Psoas muscle (tissue), 8 donors: ENCODE measurements at regions of chr18 and their contacts with region 1.

Region 1: DNA sequence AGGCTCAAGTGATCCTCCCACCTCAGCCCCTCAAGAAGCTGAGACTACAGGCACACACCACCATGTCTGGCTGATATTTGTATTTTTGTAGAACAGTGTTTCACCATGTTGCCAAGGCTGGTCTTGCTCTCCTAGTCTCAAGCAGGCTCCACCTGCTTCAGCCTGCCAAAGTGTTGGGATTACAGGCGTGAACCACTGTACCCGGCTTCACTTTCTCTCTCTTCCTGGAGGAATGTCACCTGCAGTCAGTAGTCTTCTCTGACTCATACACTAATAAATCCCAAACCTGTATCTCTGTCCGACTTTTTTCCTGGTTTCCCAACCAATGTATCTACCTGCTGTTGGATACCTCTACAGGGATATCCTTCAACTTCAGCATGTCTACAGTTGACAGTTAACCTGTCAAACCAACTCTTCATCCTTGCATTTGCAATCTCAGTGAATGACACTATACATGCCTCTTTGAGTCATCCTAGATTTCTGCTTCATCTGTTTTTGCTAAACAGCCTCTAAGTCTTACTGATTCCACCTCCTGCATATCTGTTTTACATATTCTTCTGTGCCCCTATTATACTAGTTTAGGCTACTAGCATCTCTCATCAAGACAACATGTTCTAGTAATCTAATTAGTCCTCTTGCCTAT is 54.5 kb downstream of the RBBP8 start:
- DNase-seq: no peak
- ATAC-seq: no peak
- H3K4me3 ChIP-seq: no peak overlapping the region
- H3K27ac ChIP-seq: no peak overlapping the region
- H3K4me1 ChIP-seq: no peaks in the 10 kb centered on the region
- H3K27me3 ChIP-seq: no peaks in the 10 kb centered on the region
- CTCF ChIP-seq: no peak

Region 2: DNA sequence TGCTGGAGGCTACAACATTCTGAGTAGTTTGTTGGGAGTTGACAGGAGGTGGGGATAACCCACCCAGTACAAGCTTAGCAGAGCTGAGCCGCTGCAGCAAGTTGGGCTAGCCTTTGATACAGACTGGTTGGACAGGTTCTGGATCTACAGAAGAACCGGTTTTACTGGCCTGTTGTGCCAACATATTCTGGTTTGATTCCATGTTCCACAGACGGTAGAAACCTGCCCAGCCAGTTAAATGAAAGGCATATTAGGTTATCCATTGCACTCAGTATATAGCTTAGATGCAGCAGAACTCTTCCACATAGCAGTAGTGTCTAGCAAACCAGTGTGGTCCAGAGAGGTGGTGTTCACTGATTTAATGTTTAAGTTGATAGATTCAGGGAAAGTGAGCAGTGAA is 73.8 kb before region 1 on chr18:
- intact Hi-C with region 1: no loop called
- DNase-seq: no peak
- ATAC-seq: no peak
- H3K4me3 ChIP-seq: no peak overlapping the region
- H3K27ac ChIP-seq: no peak overlapping the region
- H3K4me1 ChIP-seq: no peaks in the 10 kb centered on the region
- H3K27me3 ChIP-seq: no peaks in the 10 kb centered on the region
- CTCF ChIP-seq: no peak

Region 3: DNA sequence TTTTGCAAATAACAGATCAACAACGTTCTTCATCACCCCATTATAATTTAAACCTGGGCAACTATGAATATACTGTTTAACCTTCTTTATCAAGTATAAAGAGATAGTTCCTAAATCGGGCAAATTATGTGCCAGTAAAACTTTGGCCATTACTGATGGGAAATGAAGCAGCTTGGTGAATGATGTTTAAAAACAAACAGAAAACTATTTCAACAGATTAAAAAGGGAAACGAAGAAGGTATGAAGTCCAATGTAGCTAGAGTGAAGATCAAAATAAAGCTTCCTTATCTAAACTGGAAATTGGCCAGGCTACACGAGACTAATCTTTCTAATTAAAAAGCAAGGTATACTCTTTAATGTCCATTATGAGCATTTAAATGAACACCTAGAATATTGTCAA is 61.2 kb before region 1 on chr18:
- intact Hi-C with region 1: loop called in 1 of 2 experiments (anchors 5 kb)
- DNase-seq: no peak
- ATAC-seq: no peak
- H3K4me3 ChIP-seq: no peak overlapping the region
- H3K27ac ChIP-seq: no peak overlapping the region
- H3K4me1 ChIP-seq: no peaks in the 10 kb centered on the region
- H3K27me3 ChIP-seq: no peaks in the 10 kb centered on the region
- CTCF ChIP-seq: no peak